PC-3 (cell line): ENCODE measurements at regions of chr6 and their contacts with region 1.

Region 1: GRCh38 chr6:87407901-87408720 is at the start of gene CFAP206:
- DNase-seq: peak; percentile 71
- ATAC-seq: peak; percentile 85
- H3K4me3 ChIP-seq: peak within 1 kb of the TSS; percentile 95
- H3K27ac ChIP-seq: no peak within 1 kb of the TSS
- H3K4me1 ChIP-seq: peaks cover 6% of the 10 kb centered on the region; the same call in 1 of the 2 replicates
- H3K27me3 ChIP-seq: no peaks in the 10 kb centered on the region
- CTCF ChIP-seq: no peak
- total RNA-seq, gene CFAP206: 0.07 TPM in 1 of 2 replicates, not detected in the other

Region 2: GRCh38 chr6:87366072-87366827 is 41.9 kb before region 1 on chr6:
- CTCF ChIA-PET with region 1: no interaction called
- POLR2A ChIA-PET with region 1: no interaction called
- intact Hi-C with region 1: no loop called
- DNase-seq: no peak
- ATAC-seq: no peak
- H3K4me3 ChIP-seq: no peak overlapping the region
- H3K27ac ChIP-seq: no peak overlapping the region
- H3K4me1 ChIP-seq: no peaks in the 10 kb centered on the region
- H3K27me3 ChIP-seq: no peaks in the 10 kb centered on the region
- CTCF ChIP-seq: no peak

Region 3: GRCh38 chr6:87472525-87473418 is 64.7 kb after region 1 on chr6 and contains the start of gene SLC35A1:
- CTCF ChIA-PET with region 1: no interaction called
- POLR2A ChIA-PET with region 1: no interaction called
- intact Hi-C with region 1: loop called (anchors 5 kb)
- DNase-seq: peak; percentile 64
- ATAC-seq: peak; percentile 90
- H3K4me3 ChIP-seq: peak within 1 kb of the TSS; percentile 95
- H3K27ac ChIP-seq: no peak within 1 kb of the TSS
- H3K4me1 ChIP-seq: peaks cover 5% of the 10 kb centered on the region; the same call in 1 of the 2 replicates
- H3K27me3 ChIP-seq: no peaks in the 10 kb centered on the region
- CTCF ChIP-seq: no peak
- total RNA-seq, gene SLC35A1: 7.4 and 9.9 TPM in 2 replicates

Region 4: GRCh38 chr6:87514831-87515230 is 106.7 kb after region 1 on chr6:
- CTCF ChIA-PET with region 1: no interaction called
- POLR2A ChIA-PET with region 1: no interaction called
- intact Hi-C with region 1: no loop called
- DNase-seq: no peak
- ATAC-seq: no peak
- H3K4me3 ChIP-seq: no peak overlapping the region
- H3K27ac ChIP-seq: no peak overlapping the region
- H3K4me1 ChIP-seq: no peaks in the 10 kb centered on the region
- H3K27me3 ChIP-seq: no peaks in the 10 kb centered on the region
- CTCF ChIP-seq: no peak

Region 5: DNA sequence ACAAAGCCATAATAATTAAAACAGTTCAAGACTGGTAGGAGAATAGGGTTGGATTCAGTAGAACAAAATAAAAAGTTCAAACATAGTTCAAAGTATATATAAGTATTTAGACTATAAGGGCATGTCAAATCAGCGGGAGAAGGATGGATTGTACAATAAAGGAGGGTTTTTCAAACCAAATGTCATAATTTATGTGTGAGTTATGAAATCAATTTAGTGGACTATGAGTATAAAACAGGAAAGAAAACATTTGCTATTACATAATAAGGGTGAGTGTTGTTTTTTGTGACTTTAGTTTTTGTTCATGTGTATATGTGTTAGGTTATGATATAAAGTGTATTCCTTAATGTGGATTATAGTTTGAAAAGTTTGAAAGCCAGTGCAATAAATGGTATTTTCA is 192.5 kb after region 1 on chr6:
- CTCF ChIA-PET with region 1: no interaction called
- POLR2A ChIA-PET with region 1: no interaction called
- intact Hi-C with region 1: loop called (anchors 10 kb)
- DNase-seq: no peak
- ATAC-seq: no peak
- H3K4me3 ChIP-seq: no peak overlapping the region
- H3K27ac ChIP-seq: no peak overlapping the region
- H3K4me1 ChIP-seq: no peaks in the 10 kb centered on the region
- H3K27me3 ChIP-seq: no peaks in the 10 kb centered on the region
- CTCF ChIP-seq: no peak